Activated B cell treated with CpG ODN at 0.5 μM for 24 hours (primary cell): ENCODE measurements at regions of chr4 and their contacts with region 1.

Region 1: GRCh38 chr4:172830295-172830764 is 338.3 kb upstream of the GALNT7 start:
- DNase-seq: no peak
- ATAC-seq: no peak
- H3K4me3 Mint-ChIP-seq: no peak overlapping the region
- H3K27ac Mint-ChIP-seq: no peak overlapping the region
- H3K4me1 Mint-ChIP-seq: no peaks in the 10 kb centered on the region
- H3K27me3 Mint-ChIP-seq: no peaks in the 10 kb centered on the region
- CTCF ChIP-seq: peak; percentile 81

Region 2: DNA sequence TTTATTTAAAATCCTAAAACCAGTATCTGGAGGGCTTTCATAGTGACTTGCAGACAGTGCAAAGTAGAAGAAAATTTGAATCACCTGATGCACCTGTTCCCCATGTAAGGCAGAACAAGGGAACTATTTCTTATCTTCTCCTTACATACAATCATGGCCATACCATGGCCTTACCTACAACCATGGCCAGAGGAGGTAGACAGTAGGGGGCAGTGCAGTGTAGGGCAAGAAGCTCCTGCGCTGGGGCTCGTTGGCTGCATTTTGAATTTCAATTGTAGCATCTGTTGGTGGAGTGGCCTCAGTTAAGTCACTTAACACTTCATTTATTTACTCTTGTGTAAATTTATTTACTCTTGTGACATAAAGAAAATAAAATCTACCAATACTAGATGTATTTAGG is 984.1 kb before region 1 on chr4:
- CTCF ChIA-PET with region 1: no interaction called
- POLR2A ChIA-PET with region 1: no interaction called
- intact Hi-C with region 1: loop called (anchors 5 kb)
- DNase-seq: no peak
- ATAC-seq: no peak
- H3K4me3 Mint-ChIP-seq: no peak overlapping the region
- H3K27ac Mint-ChIP-seq: no peak overlapping the region
- H3K4me1 Mint-ChIP-seq: no peaks in the 10 kb centered on the region
- H3K27me3 Mint-ChIP-seq: no peaks in the 10 kb centered on the region
- CTCF ChIP-seq: no peak

Region 3: GRCh38 chr4:172776203-172776861 is 54.0 kb before region 1 on chr4:
- CTCF ChIA-PET with region 1: no interaction called
- POLR2A ChIA-PET with region 1: no interaction called
- intact Hi-C with region 1: no loop called
- DNase-seq: no peak
- ATAC-seq: no peak
- H3K4me3 Mint-ChIP-seq: no peak overlapping the region
- H3K27ac Mint-ChIP-seq: no peak overlapping the region
- H3K4me1 Mint-ChIP-seq: no peaks in the 10 kb centered on the region
- H3K27me3 Mint-ChIP-seq: no peaks in the 10 kb centered on the region
- CTCF ChIP-seq: no peak

Region 4: DNA sequence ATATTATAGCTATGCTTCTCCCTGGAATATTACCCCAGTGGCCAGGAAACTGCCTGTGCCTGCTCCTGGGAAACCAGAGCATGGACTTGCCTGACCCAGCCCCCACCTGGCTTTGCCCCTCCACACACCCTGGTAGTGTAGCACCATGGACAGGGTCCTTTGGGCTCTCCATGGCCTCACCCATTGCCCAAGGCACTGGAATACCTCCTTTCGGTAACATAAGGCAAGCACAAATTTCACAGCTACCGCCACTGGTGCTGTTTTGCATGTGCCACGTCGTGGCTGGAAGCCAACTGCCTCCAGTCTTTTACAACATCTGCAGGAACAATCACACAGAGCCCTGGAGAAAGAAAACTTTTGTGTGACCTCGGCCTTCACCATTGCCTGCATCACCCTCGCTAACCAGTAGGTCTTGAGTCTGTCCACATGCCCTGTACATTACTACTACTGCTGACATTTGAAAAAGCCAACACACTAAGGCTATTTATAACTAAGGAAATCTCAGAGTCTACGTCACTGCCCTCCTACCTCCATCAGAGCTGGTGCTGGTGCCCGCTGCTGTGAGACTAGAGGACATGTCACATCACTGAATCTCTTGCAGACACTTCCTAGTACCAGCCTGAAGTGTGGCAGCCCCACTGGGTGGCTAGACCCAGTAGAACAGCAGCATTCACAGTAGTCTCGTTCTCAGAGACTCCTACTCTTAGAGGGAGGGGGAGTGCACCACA is 1644.3 kb after region 1 on chr4:
- CTCF ChIA-PET with region 1: no interaction called
- POLR2A ChIA-PET with region 1: no interaction called
- intact Hi-C with region 1: no loop called
- DNase-seq: no peak
- ATAC-seq: no peak
- H3K4me3 Mint-ChIP-seq: no peak overlapping the region
- H3K27ac Mint-ChIP-seq: no peak overlapping the region
- H3K4me1 Mint-ChIP-seq: no peaks in the 10 kb centered on the region
- H3K27me3 Mint-ChIP-seq: peaks cover 3% of the 10 kb centered on the region
- CTCF ChIP-seq: no peak